Activated CD4-positive, alpha-beta memory T cell treated with anti-CD3 and anti-CD28 coated beads for 36 hours (primary cell): ENCODE measurements at regions of chr16 and their contacts with region 1.

Region 1: DNA sequence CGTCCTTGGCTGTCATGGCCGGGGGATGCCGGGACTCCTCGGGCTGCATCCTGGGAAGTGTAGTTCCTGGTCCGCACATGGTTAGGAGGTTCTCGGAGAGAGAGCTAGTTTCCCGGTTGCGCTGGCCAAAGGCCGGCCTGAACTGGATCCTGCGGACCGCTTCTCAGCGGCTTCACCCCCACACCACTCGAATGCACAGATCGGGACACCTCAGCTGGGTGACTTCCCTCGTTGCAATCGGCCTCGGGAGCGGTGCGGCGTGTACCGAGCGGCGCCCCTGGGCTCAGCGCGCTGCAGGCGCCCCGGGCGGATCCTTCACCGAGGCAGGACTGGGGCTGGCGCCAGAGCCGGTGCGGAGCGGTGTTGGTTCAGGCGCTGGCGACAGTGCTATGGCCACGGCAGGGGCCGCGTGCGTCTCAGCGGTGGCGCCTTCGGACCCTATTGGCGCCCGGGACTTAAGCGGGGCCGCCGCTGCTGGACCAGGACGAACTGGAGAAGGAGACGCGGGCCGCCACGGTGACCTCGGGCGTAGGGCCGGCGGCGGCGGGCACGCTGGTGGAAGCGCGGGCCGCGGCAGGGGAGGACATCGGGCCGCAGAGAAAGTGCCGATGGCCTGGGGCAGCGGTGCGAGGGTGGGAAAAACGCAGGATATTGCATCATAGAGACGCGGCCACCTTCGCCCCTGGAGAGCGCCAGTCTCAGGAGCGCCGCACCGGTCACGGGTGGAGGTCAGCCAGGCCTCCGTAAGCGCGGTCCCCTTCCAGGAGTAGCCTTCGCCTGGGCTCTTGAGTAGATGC is 11.4 kb downstream of the ZNF629 start:
- DNase-seq: peak; percentile 75
- H3K4me3 Mint-ChIP-seq: peak overlapping the region; percentile 91
- H3K27ac Mint-ChIP-seq: peak overlapping the region; percentile 88
- H3K4me1 Mint-ChIP-seq: peaks cover 19% of the 10 kb centered on the region
- H3K27me3 Mint-ChIP-seq: no peaks in the 10 kb centered on the region

Region 2: DNA sequence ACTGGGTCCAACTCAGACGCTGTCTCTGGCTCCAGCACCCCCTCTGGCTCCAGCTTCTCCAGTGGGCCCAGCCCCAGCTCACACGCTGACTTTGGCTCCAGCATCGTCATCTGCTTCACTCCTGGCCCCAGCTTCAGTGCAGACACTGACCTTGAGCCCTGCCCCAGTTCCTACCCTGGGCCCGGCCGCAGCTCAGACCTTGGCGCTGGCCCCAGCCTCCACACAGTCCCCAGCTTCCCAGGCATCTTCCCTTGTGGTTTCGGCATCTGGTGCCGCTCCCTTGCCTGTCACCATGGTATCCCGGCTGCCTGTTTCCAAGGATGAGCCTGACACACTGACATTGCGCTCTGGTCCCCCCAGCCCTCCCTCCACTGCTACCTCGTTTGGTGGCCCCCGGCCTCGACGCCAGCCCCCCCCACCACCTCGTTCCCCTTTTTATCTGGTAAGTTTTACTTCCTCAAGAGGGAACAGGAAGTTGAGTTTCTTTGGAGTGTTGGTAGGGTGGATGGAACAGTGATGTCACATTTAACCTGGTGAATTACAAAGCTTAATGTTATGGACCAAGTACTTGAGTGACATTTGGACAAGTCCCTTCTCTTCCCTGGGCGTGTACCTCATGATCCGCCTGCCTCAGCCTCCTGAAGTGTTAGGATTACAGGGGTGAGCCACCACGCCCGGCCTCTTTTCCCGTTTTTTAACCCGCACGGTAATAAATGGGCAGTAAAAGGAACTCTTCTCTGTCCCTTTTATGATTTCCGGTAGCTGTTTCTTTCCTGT is 50.8 kb before region 1 on chr16:
- CTCF ChIA-PET with region 1: no interaction called
- POLR2A ChIA-PET with region 1: no interaction called
- intact Hi-C with region 1: no loop called
- DNase-seq: no peak
- H3K4me3 Mint-ChIP-seq: no peak overlapping the region
- H3K27ac Mint-ChIP-seq: peak overlapping the region; percentile 42
- H3K4me1 Mint-ChIP-seq: peaks cover 4% of the 10 kb centered on the region
- H3K27me3 Mint-ChIP-seq: no peaks in the 10 kb centered on the region

Region 3: GRCh38 chr16:30761928-30762810 is 13.4 kb before region 1 on chr16 and contains the starts of genes CFAP119 and RNF40:
- CTCF ChIA-PET with region 1: no interaction called
- POLR2A ChIA-PET with region 1: no interaction called
- intact Hi-C with region 1: loop called (anchors 1 kb)
- DNase-seq: peak; percentile 96
- H3K4me3 Mint-ChIP-seq: peak within 1 kb of the TSS; percentile 93
- H3K27ac Mint-ChIP-seq: peak within 1 kb of the TSS; percentile 81
- H3K4me1 Mint-ChIP-seq: peaks cover 25% of the 10 kb centered on the region
- H3K27me3 Mint-ChIP-seq: no peaks in the 10 kb centered on the region
- total RNA-seq, gene CFAP119: 3.8 to 4.9 TPM
- total RNA-seq, gene RNF40: 70.9 to 72.8 TPM